ENCODE measurements at regions of chr6 and their contacts with region 1.

Region 1: GRCh38 chr6:78896227-78896626 is 28.9 kb downstream of the IRAK1BP1 start:
- DNase-seq: no peak
- H3K4me3 Mint-ChIP-seq: no peak overlapping the region
- H3K27ac Mint-ChIP-seq: no peak overlapping the region
- H3K4me1 Mint-ChIP-seq: no peaks in the 10 kb centered on the region
- H3K27me3 Mint-ChIP-seq: no peaks in the 10 kb centered on the region
- CTCF ChIP-seq: no peak

Region 2: GRCh38 chr6:78909391-78909790 is 13.2 kb after region 1 on chr6:
- CTCF ChIA-PET with region 1: no interaction called
- POLR2A ChIA-PET with region 1: interaction called, 19 read pairs
- intact Hi-C with region 1: no loop called
- DNase-seq: peak; percentile 49
- H3K4me3 Mint-ChIP-seq: no peak overlapping the region
- H3K27ac Mint-ChIP-seq: peak overlapping the region; percentile 29
- H3K4me1 Mint-ChIP-seq: peaks cover 23% of the 10 kb centered on the region
- H3K27me3 Mint-ChIP-seq: no peaks in the 10 kb centered on the region
- CTCF ChIP-seq: no peak

Region 3: DNA sequence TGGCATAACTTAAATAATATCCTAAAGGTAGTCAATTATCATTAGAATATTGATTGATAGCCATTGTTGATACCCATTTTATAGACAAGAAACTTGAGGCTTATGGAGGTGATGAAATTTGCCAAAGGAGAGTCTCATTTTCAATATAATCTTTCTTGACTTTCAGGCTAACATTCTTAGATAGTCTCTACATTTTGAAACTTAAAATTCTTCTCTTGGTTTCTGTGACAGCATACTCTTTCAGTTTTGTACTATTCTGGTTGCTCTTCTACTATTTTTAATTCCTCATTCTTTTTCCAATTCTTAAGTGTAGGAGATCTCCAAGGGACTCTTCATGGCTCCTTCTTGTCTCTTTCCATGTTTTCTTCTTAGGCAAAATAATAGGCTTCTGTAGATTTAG is 731.2 kb after region 1 on chr6:
- CTCF ChIA-PET with region 1: no interaction called
- POLR2A ChIA-PET with region 1: no interaction called
- intact Hi-C with region 1: no loop called
- DNase-seq: no peak
- H3K4me3 Mint-ChIP-seq: no peak overlapping the region
- H3K27ac Mint-ChIP-seq: no peak overlapping the region
- H3K4me1 Mint-ChIP-seq: peaks cover 12% of the 10 kb centered on the region
- H3K27me3 Mint-ChIP-seq: no peaks in the 10 kb centered on the region
- CTCF ChIP-seq: no peak